ENCODE measurements at regions of chr1 and their contacts with region 1.

Region 1: GRCh38 chr1:234918181-234918841 is 210.3 kb downstream of the TOMM20 start:
- DNase-seq: peak; percentile 99
- H3K4me3 ChIP-seq: no peak overlapping the region
- H3K27ac ChIP-seq: peak overlapping the region; percentile 95
- H3K4me1 ChIP-seq: peaks cover 40% of the 10 kb centered on the region
- H3K27me3 ChIP-seq: no peaks in the 10 kb centered on the region
- CTCF ChIP-seq: no peak
- POLR2A ChIP-seq: peak; percentile 77

Region 2: GRCh38 chr1:234599617-234600417 is 318.5 kb before region 1 on chr1:
- CTCF ChIA-PET with region 1: interaction called, 6 read pairs
- POLR2A ChIA-PET with region 1: no interaction called
- dilution Hi-C with region 1: no loop called
- intact Hi-C with region 1: loop called (anchors 1 kb)
- DNase-seq: peak; percentile 92
- H3K4me3 ChIP-seq: peak overlapping the region; percentile 18 to 53 (median 32)
- H3K27ac ChIP-seq: peak overlapping the region; percentile 87
- H3K4me1 ChIP-seq: peaks cover 50% of the 10 kb centered on the region
- H3K27me3 ChIP-seq: no peaks in the 10 kb centered on the region
- CTCF ChIP-seq: peak in 1 of 2 donors; percentile 3
- POLR2A ChIP-seq: no peak

Region 3: DNA sequence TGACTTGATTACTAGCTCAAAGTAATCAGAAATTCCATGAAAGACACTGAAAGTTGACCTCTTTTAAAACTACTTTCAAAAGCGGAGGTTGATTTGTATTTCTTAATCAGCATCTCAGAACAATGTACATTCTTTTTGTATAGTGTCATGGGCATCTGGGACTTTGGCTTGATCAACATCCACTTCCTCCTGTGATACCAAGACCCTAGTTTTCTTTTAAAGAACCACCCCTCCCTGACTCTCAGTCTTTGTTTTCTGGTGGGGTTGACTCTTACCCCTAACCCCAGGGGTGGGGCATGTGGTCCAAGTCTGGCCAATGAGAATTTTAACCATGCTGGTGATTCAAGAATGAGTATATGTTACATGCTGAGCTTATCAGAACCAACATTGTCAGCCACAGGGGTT is 286.6 kb before region 1 on chr1:
- CTCF ChIA-PET with region 1: no interaction called
- POLR2A ChIA-PET with region 1: no interaction called
- dilution Hi-C with region 1: no loop called
- intact Hi-C with region 1: loop called (anchors 1 kb)
- DNase-seq: peak; percentile 98
- H3K4me3 ChIP-seq: no peak overlapping the region
- H3K27ac ChIP-seq: peak overlapping the region; percentile 95
- H3K4me1 ChIP-seq: peaks cover 38% of the 10 kb centered on the region
- H3K27me3 ChIP-seq: no peaks in the 10 kb centered on the region
- CTCF ChIP-seq: no peak
- POLR2A ChIP-seq: no peak

Region 4: GRCh38 chr1:234772345-234773147 is 145.8 kb before region 1 on chr1:
- CTCF ChIA-PET with region 1: no interaction called
- POLR2A ChIA-PET with region 1: no interaction called
- dilution Hi-C with region 1: no loop called
- intact Hi-C with region 1: loop called (anchors 1 kb)
- DNase-seq: peak; percentile 91
- H3K4me3 ChIP-seq: no peak overlapping the region
- H3K27ac ChIP-seq: peak overlapping the region; percentile 89
- H3K4me1 ChIP-seq: peaks cover 12% of the 10 kb centered on the region
- H3K27me3 ChIP-seq: peaks cover 2% of the 10 kb centered on the region in 2 experiments
- CTCF ChIP-seq: no peak
- POLR2A ChIP-seq: peak; percentile 62

Region 5: GRCh38 chr1:234851450-234852438 is 66.6 kb before region 1 on chr1:
- CTCF ChIA-PET with region 1: no interaction called
- POLR2A ChIA-PET with region 1: no interaction called
- dilution Hi-C with region 1: no loop called
- intact Hi-C with region 1: no loop called
- DNase-seq: peak; percentile 52
- H3K4me3 ChIP-seq: no peak overlapping the region
- H3K27ac ChIP-seq: no peak overlapping the region
- H3K4me1 ChIP-seq: peaks cover 12% of the 10 kb centered on the region
- H3K27me3 ChIP-seq: no peaks in the 10 kb centered on the region
- CTCF ChIP-seq: no peak
- POLR2A ChIP-seq: no peak

Region 6: GRCh38 chr1:234893725-234894630 is 24.3 kb before region 1 on chr1:
- CTCF ChIA-PET with region 1: interaction called, 3 read pairs
- POLR2A ChIA-PET with region 1: interaction called, 6 read pairs
- dilution Hi-C with region 1: no loop called
- intact Hi-C with region 1: loop called (anchors 1 kb)
- DNase-seq: peak; percentile 98
- H3K4me3 ChIP-seq: no peak overlapping the region
- H3K27ac ChIP-seq: peak overlapping the region; percentile 93
- H3K4me1 ChIP-seq: peaks cover 20% of the 10 kb centered on the region
- H3K27me3 ChIP-seq: no peaks in the 10 kb centered on the region
- CTCF ChIP-seq: no peak
- POLR2A ChIP-seq: no peak

Region 7: GRCh38 chr1:234978397-234979295 is 60.3 kb after region 1 on chr1:
- CTCF ChIA-PET with region 1: interaction called, 8 read pairs
- POLR2A ChIA-PET with region 1: no interaction called
- dilution Hi-C with region 1: no loop called
- intact Hi-C with region 1: loop called (anchors 1 kb)
- DNase-seq: peak; percentile 86
- H3K4me3 ChIP-seq: no peak overlapping the region
- H3K27ac ChIP-seq: peak overlapping the region; percentile 88
- H3K4me1 ChIP-seq: peaks cover 69% of the 10 kb centered on the region
- H3K27me3 ChIP-seq: no peaks in the 10 kb centered on the region
- CTCF ChIP-seq: no peak
- POLR2A ChIP-seq: no peak

Region 8: DNA sequence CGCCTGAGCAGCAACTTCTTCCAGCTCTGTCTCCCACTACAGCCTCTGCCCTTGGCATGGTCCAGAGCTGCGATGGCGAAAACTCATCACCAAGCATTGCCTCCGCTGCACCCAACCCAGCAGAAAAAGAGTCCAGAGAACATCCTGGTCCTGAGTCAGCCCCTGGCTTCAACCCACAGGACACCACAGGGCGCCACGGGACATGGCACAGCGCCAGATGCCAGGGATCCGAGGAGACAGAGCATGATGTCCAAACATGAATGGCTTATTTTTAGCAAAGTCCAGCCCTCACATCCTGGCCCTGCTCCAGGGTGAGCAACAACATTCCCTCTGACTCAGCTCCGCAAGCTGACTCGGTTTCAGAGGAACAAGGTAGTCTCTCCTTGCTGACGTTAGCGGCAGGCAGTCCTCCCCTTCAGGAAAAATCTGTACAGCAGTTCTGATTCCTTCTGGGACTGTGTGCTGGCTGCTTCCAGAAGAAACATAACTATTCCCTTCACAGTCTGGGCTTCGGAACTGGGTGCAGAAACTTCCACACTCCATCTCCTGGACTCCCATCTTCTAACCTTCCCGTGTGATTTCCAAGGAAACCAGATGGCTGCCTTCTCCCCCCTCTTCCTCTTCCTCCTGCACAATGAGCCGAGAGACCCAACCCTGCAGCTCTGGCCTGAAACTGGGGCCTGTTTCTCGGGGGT is 79.0 kb after region 1 on chr1:
- CTCF ChIA-PET with region 1: interaction called, 3 read pairs
- POLR2A ChIA-PET with region 1: no interaction called
- dilution Hi-C with region 1: no loop called
- intact Hi-C with region 1: loop called (anchors 1 kb)
- DNase-seq: peak; percentile 99
- H3K4me3 ChIP-seq: no peak overlapping the region
- H3K27ac ChIP-seq: peak overlapping the region; percentile 95
- H3K4me1 ChIP-seq: peaks cover 28% of the 10 kb centered on the region
- H3K27me3 ChIP-seq: no peaks in the 10 kb centered on the region
- CTCF ChIP-seq: no peak
- POLR2A ChIP-seq: peak; percentile 58